ENCODE measurements at regions of chr20 and their contacts with region 1.

Region 1: DNA sequence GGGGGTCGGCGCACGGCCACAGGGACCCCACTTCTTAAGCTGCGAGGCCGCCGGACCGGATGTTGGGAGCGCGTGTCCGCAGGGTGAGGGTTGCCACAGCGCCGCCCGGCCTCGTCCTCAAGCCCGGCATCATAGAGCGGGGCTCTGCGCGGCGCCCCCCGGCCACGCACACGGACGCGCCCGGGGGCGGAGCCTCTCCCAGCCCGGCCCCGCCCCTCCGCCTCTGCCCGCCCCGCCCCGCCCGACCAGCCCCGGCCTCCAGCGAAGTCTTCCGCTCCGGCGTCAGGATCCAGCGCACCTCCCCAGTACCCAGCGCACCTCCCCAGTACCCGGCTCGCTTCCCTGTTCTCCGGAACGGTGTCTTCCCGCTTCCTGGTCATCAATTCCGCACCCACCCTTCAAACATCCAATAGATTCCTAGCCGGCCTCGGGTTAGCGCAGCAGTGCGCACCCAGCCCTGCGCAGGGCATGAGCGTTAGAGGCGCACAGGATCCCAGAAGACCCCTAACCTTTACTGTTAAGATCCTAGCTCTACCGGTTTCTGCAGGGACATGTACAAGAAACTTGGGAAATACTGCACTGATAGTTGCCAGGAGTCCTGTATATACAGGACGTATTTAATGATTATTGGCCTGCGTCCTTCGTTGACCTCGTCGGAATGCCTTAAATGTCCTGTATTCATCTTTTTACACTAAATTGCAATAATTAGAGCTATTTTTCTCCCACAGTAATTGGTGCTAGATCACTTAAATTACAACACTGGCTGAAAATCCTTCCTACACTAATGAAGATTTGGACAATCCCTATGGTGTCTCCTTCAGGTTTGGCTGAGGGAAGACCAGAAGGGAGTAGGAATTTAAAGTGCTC is 535 bp upstream of the DNAAF9 start:
- H3K4me3 Mint-ChIP-seq: peak overlapping the region; percentile 92
- H3K27ac Mint-ChIP-seq: peak overlapping the region; percentile 96
- H3K4me1 Mint-ChIP-seq: peaks cover 46% of the 10 kb centered on the region
- H3K27me3 Mint-ChIP-seq: no peaks in the 10 kb centered on the region

Region 2: DNA sequence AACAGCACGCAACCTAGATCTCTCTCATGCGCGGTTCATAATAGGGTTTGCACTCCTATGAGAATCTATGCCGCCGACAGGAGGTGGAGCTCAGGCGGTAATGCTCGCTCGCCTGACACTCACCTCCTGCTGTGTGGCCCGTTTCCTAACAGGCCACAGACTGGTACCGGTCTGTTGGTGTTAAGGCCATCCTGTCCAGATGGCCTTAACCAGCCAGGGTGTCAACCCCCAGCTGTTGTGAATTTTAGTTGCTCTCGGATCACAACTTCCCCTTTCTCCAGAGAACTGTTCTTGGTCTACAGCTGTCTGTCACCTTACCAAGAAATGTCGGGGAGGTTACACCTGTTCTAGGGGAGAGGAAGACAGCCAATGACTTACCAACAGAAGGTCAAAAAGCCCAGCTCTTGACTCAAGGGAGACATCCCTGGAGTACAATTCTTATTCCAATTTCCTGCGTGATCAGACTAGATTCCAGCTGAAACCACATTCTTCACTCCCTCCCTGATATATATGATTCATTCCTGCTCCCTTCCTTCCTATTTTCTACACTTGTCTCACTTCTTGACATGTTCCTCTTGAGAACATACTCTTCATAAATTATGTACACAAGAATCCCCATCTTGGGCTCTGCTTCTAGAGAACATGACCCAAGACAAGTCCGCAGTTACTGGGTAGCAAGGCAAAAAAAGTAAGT is 22.5 kb after region 1 on chr20:
- intact Hi-C with region 1: loop called (anchors 2 kb)
- H3K4me3 Mint-ChIP-seq: peak overlapping the region; percentile 56
- H3K27ac Mint-ChIP-seq: peak overlapping the region; percentile 92
- H3K4me1 Mint-ChIP-seq: peaks cover 56% of the 10 kb centered on the region
- H3K27me3 Mint-ChIP-seq: no peaks in the 10 kb centered on the region

Region 3: DNA sequence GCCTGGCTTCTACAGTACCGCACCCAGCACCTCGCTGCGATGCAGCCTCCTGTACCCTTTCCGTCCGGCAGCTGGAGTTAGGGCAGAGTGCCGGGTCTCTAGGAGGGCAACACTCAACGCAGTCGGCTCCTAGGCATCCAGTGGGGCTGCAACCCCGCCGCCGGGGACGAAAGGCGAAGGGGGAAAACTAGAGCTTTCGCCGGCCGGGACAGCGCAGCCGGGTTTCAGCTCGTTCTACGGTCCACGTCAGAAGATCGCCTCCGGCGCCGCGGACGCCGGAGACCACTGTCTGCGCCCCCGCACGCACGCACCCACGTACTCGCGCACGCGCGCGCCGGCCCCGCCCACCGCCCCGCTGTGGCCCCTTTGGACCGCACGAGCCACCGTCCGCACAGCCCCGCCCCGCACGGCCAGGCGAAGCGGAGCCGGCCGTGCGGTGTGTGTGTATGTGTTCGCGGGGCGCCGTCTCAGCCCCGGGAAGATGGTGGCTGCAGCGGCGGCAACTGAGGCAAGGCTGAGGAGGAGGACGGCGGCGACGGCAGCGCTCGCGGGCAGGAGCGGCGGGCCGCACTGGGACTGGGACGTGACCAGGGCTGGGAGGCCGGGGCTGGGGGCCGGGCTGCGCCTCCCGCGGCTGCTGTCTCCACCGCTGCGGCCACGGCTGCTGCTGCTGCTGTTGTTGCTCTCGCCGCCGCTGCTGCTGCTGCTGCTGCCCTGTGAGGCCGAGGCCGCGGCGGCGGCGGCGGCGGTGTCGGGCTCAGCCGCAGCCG is 62.8 kb after region 1 on chr20 and contains the start of gene ATRN:
- intact Hi-C with region 1: loop called (anchors 2 kb)
- H3K4me3 Mint-ChIP-seq: peak within 1 kb of the TSS; percentile 99
- H3K27ac Mint-ChIP-seq: peak within 1 kb of the TSS; percentile 90
- H3K4me1 Mint-ChIP-seq: peaks cover 38% of the 10 kb centered on the region
- H3K27me3 Mint-ChIP-seq: peaks cover 3% of the 10 kb centered on the region

Region 4: DNA sequence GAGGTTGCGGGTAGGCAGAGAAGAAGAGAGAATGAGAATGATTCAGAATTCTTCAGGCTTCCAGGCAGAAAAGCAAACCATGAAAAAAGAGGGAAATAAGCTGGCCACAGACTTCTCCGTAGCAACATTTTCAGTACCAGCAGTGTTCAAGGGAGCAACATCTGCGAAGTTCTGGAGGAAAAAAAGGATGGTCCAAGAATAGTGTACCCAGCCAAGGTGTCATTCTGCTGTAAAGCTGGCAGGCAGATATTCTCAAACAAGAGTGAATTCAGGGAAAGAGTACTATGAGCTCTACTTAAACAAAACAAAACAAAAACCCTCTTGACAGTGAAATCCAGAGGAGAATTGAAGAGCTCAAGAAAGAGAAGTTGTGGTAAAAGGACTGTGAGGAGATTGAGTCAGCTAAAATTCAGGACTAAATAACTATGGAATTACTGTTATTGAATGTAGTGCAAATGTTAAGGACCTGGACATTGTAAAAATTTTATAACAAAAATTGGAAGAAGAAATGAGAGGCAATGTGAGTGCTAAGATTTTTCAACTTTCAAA is 149.3 kb after region 1 on chr20:
- intact Hi-C with region 1: loop called (anchors 10 kb)
- H3K4me3 Mint-ChIP-seq: peak overlapping the region; percentile 79
- H3K27ac Mint-ChIP-seq: peak overlapping the region; percentile 94
- H3K4me1 Mint-ChIP-seq: peaks cover 46% of the 10 kb centered on the region
- H3K27me3 Mint-ChIP-seq: no peaks in the 10 kb centered on the region